ENCODE measurements at regions of chr3 and their contacts with region 1.

Region 1: GRCh38 chr3:29971895-29972294 is 634.5 kb upstream of the TGFBR2 start:
- DNase-seq: no peak
- H3K4me3 ChIP-seq: no peak overlapping the region
- H3K27ac ChIP-seq: no peak overlapping the region
- H3K4me1 ChIP-seq: no peaks in the 10 kb centered on the region
- CTCF ChIP-seq: no peak

Region 2: GRCh38 chr3:29896856-29897255 is 75.0 kb before region 1 on chr3:
- CTCF ChIA-PET with region 1: no interaction called
- POLR2A ChIA-PET with region 1: no interaction called
- intact Hi-C with region 1: loop called (anchors 2 kb)
- DNase-seq: no peak
- H3K4me3 ChIP-seq: no peak overlapping the region
- H3K27ac ChIP-seq: no peak overlapping the region
- H3K4me1 ChIP-seq: no peaks in the 10 kb centered on the region
- CTCF ChIP-seq: no peak

Region 3: GRCh38 chr3:29922992-29923746 is 48.7 kb before region 1 on chr3:
- CTCF ChIA-PET with region 1: no interaction called
- POLR2A ChIA-PET with region 1: no interaction called
- intact Hi-C with region 1: no loop called
- DNase-seq: no peak
- H3K4me3 ChIP-seq: no peak overlapping the region
- H3K27ac ChIP-seq: no peak overlapping the region
- H3K4me1 ChIP-seq: no peaks in the 10 kb centered on the region
- CTCF ChIP-seq: no peak

Measured in OCI-LY7 (cell line).